Astrocyte of the cerebellum (primary cell): ENCODE measurements at regions of chr12 and their contacts with region 1.

Region 1: DNA sequence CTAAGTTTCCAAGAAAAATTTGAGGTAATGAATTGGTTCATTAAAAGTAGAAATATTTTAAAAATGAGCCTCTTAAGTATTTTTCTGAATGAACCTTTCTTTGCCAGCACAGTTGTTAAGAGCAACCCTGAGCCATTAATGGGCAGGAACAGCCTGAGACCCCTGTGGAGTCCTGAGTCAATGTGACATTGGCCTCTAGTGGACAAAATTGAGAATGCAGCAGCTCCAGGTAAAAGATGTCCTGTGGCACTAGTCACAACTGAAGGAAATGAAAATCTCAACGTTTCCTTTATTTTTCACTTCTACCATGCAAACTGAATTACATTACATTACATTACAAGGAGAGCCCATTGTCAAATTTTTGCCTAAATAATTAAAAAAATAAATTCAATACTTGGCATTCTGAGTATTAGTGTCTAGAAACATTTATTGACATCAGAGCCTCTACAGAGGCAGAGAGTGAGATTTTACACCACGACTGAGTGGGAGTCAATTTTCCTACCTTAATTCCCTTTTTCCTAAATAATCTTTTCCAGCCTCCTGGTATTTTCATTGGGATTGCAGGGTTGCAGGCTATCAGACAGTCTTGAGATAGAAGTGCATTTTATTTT is 135.7 kb downstream of the PPM1H start:
- DNase-seq: peak; percentile 80
- H3K4me3 ChIP-seq: no peak overlapping the region
- CTCF ChIP-seq: peak; percentile 96

Region 2: DNA sequence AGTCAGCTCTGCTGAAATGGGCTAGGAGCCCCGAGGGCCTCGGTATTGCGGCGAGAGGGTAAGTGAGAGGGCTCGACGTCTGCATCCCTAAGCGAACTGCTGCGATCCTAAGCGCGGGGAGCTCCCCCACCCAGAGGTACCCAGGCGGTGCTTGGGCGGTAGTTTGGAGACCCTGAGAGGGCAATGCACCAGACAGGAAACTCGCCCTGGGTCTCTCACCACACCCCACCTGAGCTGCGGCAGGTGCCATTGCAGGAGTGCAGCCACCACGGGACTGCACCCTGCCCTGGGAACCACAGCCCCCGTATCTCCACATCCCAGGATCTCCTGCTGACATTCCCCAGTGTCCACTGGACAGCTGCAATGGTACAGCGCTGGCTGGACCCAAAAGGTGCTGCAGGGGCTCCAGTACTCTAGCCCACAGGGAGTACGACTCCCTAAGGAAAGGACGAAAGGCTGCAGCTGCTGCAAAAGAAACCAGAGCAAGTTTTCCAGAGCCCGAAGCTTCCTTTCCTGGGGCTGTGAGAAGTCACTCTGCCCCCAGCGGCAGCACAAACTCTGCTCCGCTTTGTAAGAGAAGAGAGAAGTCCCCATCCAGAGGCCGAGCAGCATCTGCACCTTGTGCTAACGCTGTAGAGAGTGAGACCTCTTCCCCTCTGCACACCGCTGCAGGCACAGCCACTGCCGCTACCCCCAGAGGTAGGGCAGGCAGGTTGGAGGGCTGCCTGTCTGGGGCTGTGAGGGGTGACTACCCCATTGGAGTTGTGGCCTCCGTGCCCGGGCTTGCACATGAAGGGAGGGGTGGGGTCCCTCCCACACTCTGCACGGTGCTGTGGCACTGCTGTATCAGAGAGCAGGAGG is 363.7 kb before region 1 on chr12:
- in situ Hi-C with region 1: loop called (anchors 10 kb)
- DNase-seq: peak; percentile 49
- H3K4me3 ChIP-seq: peak overlapping the region; percentile 48
- CTCF ChIP-seq: peak; percentile 81